Head of caudate nucleus (tissue), 42 donors: ENCODE measurements at regions of chr12 and their contacts with region 1.

Region 1: GRCh38 chr12:75526655-75527511 is 15.5 kb upstream of the KRR1 start:
- DNase-seq: peak in 19 of 42 donors; percentile 3 to 46 (median 12)

Region 2: GRCh38 chr12:74820324-74820723 is 706.6 kb before region 1 on chr12:
- intact Hi-C with region 1: no loop called
- DNase-seq: no peak

Region 3: GRCh38 chr12:75571204-75571603 is 44.3 kb after region 1 on chr12:
- intact Hi-C with region 1: no loop called
- DNase-seq: no peak

Region 4: DNA sequence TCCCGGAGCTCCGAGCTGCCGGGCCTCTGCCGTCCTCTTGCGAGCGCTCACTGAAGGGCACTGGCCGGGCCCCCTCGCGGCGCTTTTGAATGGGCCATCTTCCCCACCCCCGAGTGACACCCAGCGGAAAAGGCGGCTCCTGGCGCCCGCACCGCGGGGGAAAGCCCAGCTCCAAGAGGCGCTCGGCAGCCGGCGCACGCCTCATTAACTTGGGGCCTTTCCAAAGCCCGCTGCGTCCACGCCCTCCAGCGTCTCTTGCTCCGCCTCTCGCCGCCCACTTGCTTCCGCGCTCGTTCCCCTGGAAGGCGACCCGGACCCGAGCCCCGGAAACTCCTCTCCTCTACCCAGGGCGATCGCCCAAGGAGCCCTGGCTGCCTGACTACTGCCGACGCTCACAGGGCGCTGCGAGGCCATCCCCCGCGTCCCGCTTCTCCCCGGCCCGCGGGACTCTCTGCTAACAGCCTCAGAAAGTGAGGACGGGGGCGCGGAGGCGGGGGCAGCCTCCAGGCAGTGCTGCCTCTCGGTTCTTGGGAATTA is 504.7 kb after region 1 on chr12 and contains the start of gene PHLDA1:
- intact Hi-C with region 1: loop called (anchors 5 kb)
- DNase-seq: peak; percentile 79 to 98 (median 94)